ENCODE measurements at regions of chr16 and their contacts with region 1.

Region 1: GRCh38 chr16:31179747-31180459 is at the start of gene FUS:
- DNase-seq: peak; percentile 88
- H3K4me3 Mint-ChIP-seq: peak within 1 kb of the TSS; percentile 98
- H3K27ac Mint-ChIP-seq: peak within 1 kb of the TSS; percentile 99
- H3K4me1 Mint-ChIP-seq: peaks cover 54% of the 10 kb centered on the region
- H3K27me3 Mint-ChIP-seq: no peaks in the 10 kb centered on the region
- total RNA-seq, gene FUS: 950 and 955 TPM in 2 replicates

Region 2: DNA sequence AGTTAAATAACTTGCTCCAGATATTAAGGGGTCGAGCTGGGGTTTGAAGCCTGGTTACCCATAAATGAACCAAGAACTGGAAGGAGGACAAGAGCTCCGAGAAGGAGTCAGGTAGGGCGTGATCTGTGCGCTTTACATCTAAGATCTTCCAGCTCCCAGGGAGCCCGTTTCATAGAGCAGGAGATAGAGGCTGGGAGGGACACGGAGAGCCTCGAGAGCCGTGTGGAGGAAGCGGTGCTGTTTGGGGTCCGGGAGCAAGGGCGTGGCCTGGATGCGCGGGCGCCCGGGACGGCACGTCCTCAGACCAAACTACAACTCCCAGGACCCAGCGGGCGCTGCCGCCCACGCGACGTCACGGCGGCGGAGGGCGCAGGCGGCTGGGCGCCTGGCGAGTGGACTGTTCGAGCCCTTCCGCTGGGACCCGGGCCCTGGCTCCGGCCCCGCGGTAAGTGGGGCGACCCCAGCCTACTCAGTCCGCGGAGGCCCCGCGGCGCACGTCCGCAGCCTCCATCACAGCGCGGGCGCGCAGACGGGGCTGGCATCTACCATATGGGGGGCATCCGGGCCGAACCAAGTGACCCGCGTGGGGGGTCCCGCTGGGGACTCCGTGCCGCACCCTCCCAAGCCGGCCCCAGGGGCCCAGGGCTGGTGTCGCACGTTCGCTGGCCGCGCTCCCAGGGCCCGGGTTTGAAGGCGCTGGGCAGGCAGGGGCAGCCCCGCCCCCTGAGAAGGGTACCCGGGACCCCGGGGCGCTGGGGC is 71.7 kb before region 1 on chr16 and contains the start of gene BCKDK:
- intact Hi-C with region 1: loop called (anchors 2 kb)
- DNase-seq: peak; percentile 69
- H3K4me3 Mint-ChIP-seq: peak within 1 kb of the TSS; percentile 84
- H3K27ac Mint-ChIP-seq: peak within 1 kb of the TSS; percentile 86
- H3K4me1 Mint-ChIP-seq: peaks cover 22% of the 10 kb centered on the region
- H3K27me3 Mint-ChIP-seq: no peaks in the 10 kb centered on the region
- total RNA-seq, gene BCKDK: 43.6 and 44.8 TPM in 2 replicates

Region 3: GRCh38 chr16:31142109-31143010 is 37.5 kb before region 1 on chr16:
- intact Hi-C with region 1: loop called (anchors 1 kb)
- DNase-seq: peak; percentile 98
- H3K4me3 Mint-ChIP-seq: peak overlapping the region; percentile 78
- H3K27ac Mint-ChIP-seq: peak overlapping the region; percentile 88
- H3K4me1 Mint-ChIP-seq: peaks cover 12% of the 10 kb centered on the region
- H3K27me3 Mint-ChIP-seq: peaks cover 13% of the 10 kb centered on the region

Region 4: DNA sequence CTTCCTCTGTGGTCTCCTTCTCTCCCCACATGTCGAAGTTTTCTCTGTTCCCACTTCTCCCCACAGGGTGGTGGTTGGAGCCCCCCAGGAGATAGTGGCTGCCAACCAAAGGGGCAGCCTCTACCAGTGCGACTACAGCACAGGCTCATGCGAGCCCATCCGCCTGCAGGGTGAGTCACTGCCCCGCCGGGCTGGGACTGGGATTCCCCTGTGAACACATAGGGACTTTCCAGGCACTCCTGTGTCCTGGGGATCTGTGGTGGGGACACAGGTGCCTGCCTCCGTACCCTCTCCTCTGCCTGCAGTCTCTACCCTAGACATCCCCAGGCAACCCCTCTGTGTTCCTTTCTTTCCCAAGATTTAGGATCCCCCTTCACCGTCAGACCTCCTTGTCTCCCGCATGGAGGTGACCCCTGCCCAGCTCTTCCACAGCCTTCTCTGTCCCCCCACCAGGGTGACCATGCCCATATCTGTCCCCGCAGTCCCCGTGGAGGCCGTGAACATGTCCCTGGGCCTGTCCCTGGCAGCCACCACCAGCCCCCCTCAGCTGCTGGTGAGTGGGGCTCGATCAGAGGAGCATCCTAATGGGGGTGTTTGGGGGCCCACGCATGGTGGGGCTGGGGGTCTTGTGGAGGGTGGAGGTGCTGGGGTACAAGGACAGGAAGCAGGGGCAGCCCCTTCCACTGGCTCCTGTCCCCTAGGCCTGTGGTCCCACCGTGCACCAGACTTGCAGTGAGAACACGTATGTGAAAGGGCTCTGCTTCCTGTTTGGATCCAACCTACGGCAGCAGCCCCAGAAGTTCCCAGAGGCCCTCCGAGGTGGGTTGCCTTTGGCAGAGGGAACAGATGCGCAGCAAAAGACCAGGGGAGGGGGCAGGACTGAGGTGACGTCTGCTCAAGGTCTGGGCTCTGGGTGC is 85.7 kb after region 1 on chr16:
- intact Hi-C with region 1: loop called (anchors 5 kb)
- DNase-seq: peak; percentile 78
- H3K4me3 Mint-ChIP-seq: peak overlapping the region; percentile 80
- H3K27ac Mint-ChIP-seq: peak overlapping the region; percentile 95
- H3K4me1 Mint-ChIP-seq: peaks cover 71% of the 10 kb centered on the region
- H3K27me3 Mint-ChIP-seq: no peaks in the 10 kb centered on the region

Region 5: GRCh38 chr16:31382485-31383161 is 202.7 kb after region 1 on chr16:
- intact Hi-C with region 1: no loop called
- DNase-seq: peak; percentile 60
- H3K4me3 Mint-ChIP-seq: no peak overlapping the region
- H3K27ac Mint-ChIP-seq: no peak overlapping the region
- H3K4me1 Mint-ChIP-seq: peaks cover 31% of the 10 kb centered on the region
- H3K27me3 Mint-ChIP-seq: peaks cover 3% of the 10 kb centered on the region

Region 6: DNA sequence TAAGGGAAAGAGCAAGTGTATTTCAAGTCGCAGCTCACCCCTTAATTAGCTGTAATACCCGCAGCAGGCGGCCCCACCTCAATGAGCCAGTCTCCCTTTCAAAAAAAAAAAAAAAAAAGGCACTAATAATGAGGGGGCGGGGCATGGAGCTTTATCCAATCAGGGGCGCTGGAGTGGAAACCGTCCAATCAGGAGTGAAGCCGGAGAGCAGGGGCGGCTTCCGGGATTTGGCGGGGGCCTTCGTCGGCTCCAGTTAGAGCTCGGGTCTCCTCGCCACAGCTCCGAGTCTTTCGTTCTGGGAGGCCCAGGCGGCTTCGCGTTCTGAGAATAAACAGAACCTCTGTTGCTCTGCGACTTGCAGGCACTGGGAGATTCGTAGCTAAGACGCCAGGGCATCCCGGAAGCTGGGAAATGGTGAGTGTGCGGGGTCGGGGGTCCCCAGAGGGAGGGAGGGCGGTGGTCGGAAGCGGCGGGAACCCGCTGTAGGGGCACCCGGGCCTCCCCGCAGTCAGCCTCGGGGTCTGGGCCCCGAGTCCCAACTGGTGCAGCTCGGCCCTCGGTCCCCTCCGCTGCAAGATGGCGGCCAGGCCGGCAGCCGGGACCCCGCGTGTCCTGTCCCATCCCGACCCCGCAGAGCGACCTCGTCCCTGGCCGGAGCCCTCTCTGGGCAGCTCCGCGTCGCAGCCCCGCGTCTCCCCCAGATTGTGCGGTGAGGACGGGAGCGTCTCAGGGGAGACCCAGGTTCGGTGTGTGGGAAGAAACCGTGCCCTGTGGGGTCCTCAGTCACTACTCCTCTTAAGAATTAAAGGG is 693.9 kb after region 1 on chr16 and contains the start of gene ZNF267:
- intact Hi-C with region 1: loop called (anchors 2 kb)
- DNase-seq: peak; percentile 90
- H3K4me3 Mint-ChIP-seq: peak within 1 kb of the TSS; percentile 96
- H3K27ac Mint-ChIP-seq: peak within 1 kb of the TSS; percentile 94
- H3K4me1 Mint-ChIP-seq: peaks cover 84% of the 10 kb centered on the region
- H3K27me3 Mint-ChIP-seq: no peaks in the 10 kb centered on the region
- total RNA-seq, gene ZNF267: 93.9 and 98.9 TPM in 2 replicates

Measured in activated T-helper 1 cell treated with anti-CD3 and anti-CD28 coated beads, Interleukin-12 subunit alpha, Interleukin-12 subunit beta, Interleukin-2, Interleukin-4 antibody, amounts not matched to agents 30 ng/mL and 10 ng/mL and 1 ng/mL, durations not matched to agents 14 hours and 24 hours and 36 hours (primary cell).